CD8-positive, alpha-beta T cell (primary cell): ENCODE measurements at regions of chr21 and their contacts with region 1.

Region 1: GRCh38 chr21:37463083-37463801 is 96.7 kb downstream of the DYRK1A start:
- DNase-seq: peak in 2 of 9 experiments; percentile 53 to 67
- ATAC-seq: peak; percentile 69
- H3K4me3 ChIP-seq: no peak overlapping the region
- H3K4me3 Mint-ChIP-seq: peak overlapping the region; percentile 30
- H3K27ac ChIP-seq: peak overlapping the region in 1 of 2 experiments; percentile 14
- H3K27ac Mint-ChIP-seq: peak overlapping the region; percentile 86
- H3K4me1 ChIP-seq: peaks cover 61% of the 10 kb centered on the region
- H3K4me1 Mint-ChIP-seq: peaks cover 88% of the 10 kb centered on the region
- H3K27me3 ChIP-seq: no peaks in the 10 kb centered on the region
- H3K27me3 Mint-ChIP-seq: no peaks in the 10 kb centered on the region
- CTCF ChIP-seq: peak; percentile 50

Region 2: GRCh38 chr21:37267269-37268184 is 195.7 kb before region 1 on chr21 and contains the start of gene VPS26C:
- CTCF ChIA-PET with region 1: interaction called, 8 read pairs
- POLR2A ChIA-PET with region 1: no interaction called
- intact Hi-C with region 1: loop called in 1 of 2 experiments (anchors 5 kb)
- DNase-seq: peak; percentile 96 to 100 (median 98)
- ATAC-seq: peak; percentile 84
- H3K4me3 ChIP-seq: peak within 1 kb of the TSS; percentile 71 to 97
- H3K4me3 Mint-ChIP-seq: peak within 1 kb of the TSS; percentile 96
- H3K27ac ChIP-seq: peak within 1 kb of the TSS; percentile 98 to 100
- H3K27ac Mint-ChIP-seq: peak within 1 kb of the TSS; percentile 98
- H3K4me1 ChIP-seq: peaks cover 20% of the 10 kb centered on the region
- H3K4me1 Mint-ChIP-seq: peaks cover 49% of the 10 kb centered on the region
- H3K27me3 ChIP-seq: no peaks in the 10 kb centered on the region
- H3K27me3 Mint-ChIP-seq: no peaks in the 10 kb centered on the region
- CTCF ChIP-seq: no peak
- total RNA-seq, gene VPS26C: 37.4 to 39.4 TPM

Region 3: GRCh38 chr21:37425684-37426083 is 37.6 kb before region 1 on chr21:
- CTCF ChIA-PET with region 1: no interaction called
- POLR2A ChIA-PET with region 1: no interaction called
- intact Hi-C with region 1: no loop called
- DNase-seq: no peak
- ATAC-seq: no peak
- H3K4me3 ChIP-seq: no peak overlapping the region
- H3K4me3 Mint-ChIP-seq: no peak overlapping the region
- H3K27ac ChIP-seq: no peak overlapping the region
- H3K27ac Mint-ChIP-seq: no peak overlapping the region
- H3K4me1 ChIP-seq: peaks cover 18% of the 10 kb centered on the region
- H3K4me1 Mint-ChIP-seq: peaks cover 67% of the 10 kb centered on the region
- H3K27me3 ChIP-seq: no peaks in the 10 kb centered on the region
- H3K27me3 Mint-ChIP-seq: no peaks in the 10 kb centered on the region
- CTCF ChIP-seq: no peak

Region 4: DNA sequence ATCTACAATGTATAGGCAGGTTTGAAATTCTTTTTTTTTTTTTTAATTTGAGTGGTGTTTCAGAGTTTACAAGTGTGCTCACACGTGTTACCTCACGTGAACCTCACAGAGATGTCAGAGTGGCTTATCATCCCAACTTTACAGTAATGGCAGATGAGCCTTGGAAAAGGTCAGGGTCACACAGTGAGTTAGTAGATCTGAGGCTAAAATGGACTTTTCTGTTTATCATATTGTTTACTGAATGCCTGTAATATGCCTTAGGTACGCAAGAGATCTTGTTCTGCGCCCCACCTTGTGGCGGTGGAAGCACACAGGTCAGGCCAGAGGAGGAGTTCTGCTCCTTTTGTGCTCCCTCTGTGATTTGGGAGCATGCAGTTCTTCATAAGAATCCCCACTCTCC is 16.7 kb before region 1 on chr21:
- CTCF ChIA-PET with region 1: interaction called, 6 read pairs
- POLR2A ChIA-PET with region 1: interaction called, 3 read pairs
- intact Hi-C with region 1: loop called in 1 of 2 experiments (anchors 2 kb)
- DNase-seq: no peak
- ATAC-seq: peak; percentile 26
- H3K4me3 ChIP-seq: no peak overlapping the region
- H3K4me3 Mint-ChIP-seq: no peak overlapping the region
- H3K27ac ChIP-seq: peak overlapping the region in 1 of 2 experiments; percentile 2
- H3K27ac Mint-ChIP-seq: peak overlapping the region; percentile 20
- H3K4me1 ChIP-seq: peaks cover 58% of the 10 kb centered on the region
- H3K4me1 Mint-ChIP-seq: peaks cover 88% of the 10 kb centered on the region
- H3K27me3 ChIP-seq: no peaks in the 10 kb centered on the region
- H3K27me3 Mint-ChIP-seq: no peaks in the 10 kb centered on the region
- CTCF ChIP-seq: no peak

Region 5: GRCh38 chr21:37452227-37452626 is 11.0 kb before region 1 on chr21:
- CTCF ChIA-PET with region 1: interaction called, 6 read pairs
- POLR2A ChIA-PET with region 1: interaction called, 3 read pairs
- intact Hi-C with region 1: loop called in 1 of 2 experiments (anchors 1 kb)
- DNase-seq: no peak
- ATAC-seq: no peak
- H3K4me3 ChIP-seq: no peak overlapping the region
- H3K4me3 Mint-ChIP-seq: no peak overlapping the region
- H3K27ac ChIP-seq: no peak overlapping the region
- H3K27ac Mint-ChIP-seq: peak overlapping the region; percentile 47
- H3K4me1 ChIP-seq: peaks cover 47% of the 10 kb centered on the region
- H3K4me1 Mint-ChIP-seq: peaks cover 86% of the 10 kb centered on the region
- H3K27me3 ChIP-seq: no peaks in the 10 kb centered on the region
- H3K27me3 Mint-ChIP-seq: no peaks in the 10 kb centered on the region
- CTCF ChIP-seq: no peak

Region 6: GRCh38 chr21:37475186-37475868 is 12.1 kb after region 1 on chr21:
- CTCF ChIA-PET with region 1: interaction called, 4 read pairs
- POLR2A ChIA-PET with region 1: interaction called, 3 read pairs
- intact Hi-C with region 1: loop called in 1 of 2 experiments (anchors 2 kb)
- DNase-seq: peak in 1 of 9 experiments; percentile 18
- ATAC-seq: peak; percentile 26
- H3K4me3 ChIP-seq: no peak overlapping the region
- H3K4me3 Mint-ChIP-seq: no peak overlapping the region
- H3K27ac ChIP-seq: peak overlapping the region in 1 of 2 experiments; percentile 52
- H3K27ac Mint-ChIP-seq: no peak overlapping the region
- H3K4me1 ChIP-seq: peaks cover 45% of the 10 kb centered on the region
- H3K4me1 Mint-ChIP-seq: peaks cover 68% of the 10 kb centered on the region
- H3K27me3 ChIP-seq: no peaks in the 10 kb centered on the region
- H3K27me3 Mint-ChIP-seq: no peaks in the 10 kb centered on the region
- CTCF ChIP-seq: no peak